ENCODE measurements at regions of chr3 and their contacts with region 1.

Region 1: GRCh38 chr3:133821767-133822638 is 16.4 kb downstream of the SRPRB start:
- DNase-seq: peak in 1 of 2 donors; percentile 83
- H3K4me3 ChIP-seq: no peak overlapping the region
- H3K27ac ChIP-seq: no peak overlapping the region
- H3K4me1 ChIP-seq: peaks cover 19% of the 10 kb centered on the region
- H3K27me3 ChIP-seq: no peaks in the 10 kb centered on the region
- CTCF ChIP-seq: no peak
- POLR2A ChIP-seq: no peak

Region 2: DNA sequence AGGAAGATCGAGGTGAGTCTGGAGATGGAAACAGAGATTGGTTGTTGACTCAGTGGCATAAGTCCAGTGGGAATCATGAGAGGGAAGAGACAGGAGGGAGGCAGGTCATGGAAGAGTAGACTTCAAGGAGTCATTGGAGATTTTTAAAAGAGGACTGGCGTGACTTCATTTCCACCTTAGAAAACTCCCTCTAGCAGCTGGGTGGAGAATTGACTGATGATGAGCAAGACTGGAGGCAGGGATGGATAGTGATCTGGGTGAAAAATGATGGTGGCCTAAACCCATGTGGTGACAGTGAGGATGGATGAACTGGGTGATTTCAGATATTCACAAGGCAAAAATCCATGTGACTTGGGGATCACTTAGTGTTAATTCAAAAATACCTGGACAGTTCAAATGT is 1764.1 kb before region 1 on chr3:
- intact Hi-C with region 1: no loop called
- DNase-seq: no peak
- H3K4me3 ChIP-seq: no peak overlapping the region
- H3K27ac ChIP-seq: no peak overlapping the region
- H3K4me1 ChIP-seq: no peaks in the 10 kb centered on the region
- H3K27me3 ChIP-seq: no peaks in the 10 kb centered on the region
- CTCF ChIP-seq: no peak
- POLR2A ChIP-seq: no peak

Region 3: GRCh38 chr3:133831966-133832802 is 10.2 kb after region 1 on chr3:
- intact Hi-C with region 1: no loop called
- DNase-seq: peak; percentile 82 to 84
- H3K4me3 ChIP-seq: no peak overlapping the region
- H3K27ac ChIP-seq: no peak overlapping the region
- H3K4me1 ChIP-seq: no peaks in the 10 kb centered on the region
- H3K27me3 ChIP-seq: no peaks in the 10 kb centered on the region
- CTCF ChIP-seq: no peak
- POLR2A ChIP-seq: no peak

Region 4: GRCh38 chr3:133927540-133928066 is 105.6 kb after region 1 on chr3:
- intact Hi-C with region 1: loop called (anchors 10 kb)
- DNase-seq: peak; percentile 84
- H3K4me3 ChIP-seq: peak overlapping the region; percentile 51 to 62
- H3K27ac ChIP-seq: peak overlapping the region; percentile 43
- H3K4me1 ChIP-seq: peaks cover 10% of the 10 kb centered on the region
- H3K27me3 ChIP-seq: no peaks in the 10 kb centered on the region
- CTCF ChIP-seq: peak; percentile 43 to 81 (median 47)
- POLR2A ChIP-seq: no peak

Measured in vagina (tissue), 2 donors.